ENCODE measurements at regions of chr4 and their contacts with region 1.

Region 1: GRCh38 chr4:5998333-5998936 is 19.8 kb downstream of the C4orf50 start:
- DNase-seq: peak; percentile 76
- ATAC-seq: peak; percentile 86
- H3K4me3 Mint-ChIP-seq: no peak overlapping the region
- H3K27ac Mint-ChIP-seq: no peak overlapping the region
- H3K4me1 Mint-ChIP-seq: no peaks in the 10 kb centered on the region
- H3K27me3 Mint-ChIP-seq: no peaks in the 10 kb centered on the region
- CTCF ChIP-seq: peak; percentile 94

Region 2: DNA sequence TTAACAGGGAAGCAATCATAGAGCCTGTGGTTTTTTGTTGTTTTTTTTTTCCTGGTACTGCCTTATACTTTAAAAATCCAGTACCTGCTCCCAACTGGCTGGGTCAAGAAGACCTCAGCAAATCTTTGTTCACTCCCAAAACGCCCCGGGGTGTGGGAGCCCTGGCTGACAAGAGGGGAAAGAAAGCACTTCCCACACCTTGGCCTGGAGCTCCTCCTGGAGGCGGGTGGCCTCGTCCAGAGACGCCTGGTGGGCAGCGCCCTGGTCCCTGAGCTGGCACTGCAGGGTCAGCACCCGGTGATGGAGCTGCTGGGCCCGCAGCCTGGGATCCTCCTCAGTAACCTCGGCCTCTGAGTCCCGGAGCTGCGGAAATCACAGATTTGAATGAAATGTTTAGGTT is 18.5 kb before region 1 on chr4:
- CTCF ChIA-PET with region 1: interaction called, 15 read pairs
- POLR2A ChIA-PET with region 1: no interaction called
- DNase-seq: peak; percentile 85
- ATAC-seq: peak; percentile 96
- H3K4me3 Mint-ChIP-seq: no peak overlapping the region
- H3K27ac Mint-ChIP-seq: no peak overlapping the region
- H3K4me1 Mint-ChIP-seq: peaks cover 2% of the 10 kb centered on the region; the same call in 1 of the 2 replicates
- H3K27me3 Mint-ChIP-seq: peaks cover 13% of the 10 kb centered on the region
- CTCF ChIP-seq: no peak

Region 3: GRCh38 chr4:6011686-6012085 is 13.3 kb after region 1 on chr4:
- CTCF ChIA-PET with region 1: interaction called, 24 read pairs
- POLR2A ChIA-PET with region 1: no interaction called
- DNase-seq: no peak
- ATAC-seq: no peak
- H3K4me3 Mint-ChIP-seq: no peak overlapping the region
- H3K27ac Mint-ChIP-seq: no peak overlapping the region
- H3K4me1 Mint-ChIP-seq: peaks cover 14% of the 10 kb centered on the region
- H3K27me3 Mint-ChIP-seq: peaks cover 29% of the 10 kb centered on the region
- CTCF ChIP-seq: no peak

Region 4: DNA sequence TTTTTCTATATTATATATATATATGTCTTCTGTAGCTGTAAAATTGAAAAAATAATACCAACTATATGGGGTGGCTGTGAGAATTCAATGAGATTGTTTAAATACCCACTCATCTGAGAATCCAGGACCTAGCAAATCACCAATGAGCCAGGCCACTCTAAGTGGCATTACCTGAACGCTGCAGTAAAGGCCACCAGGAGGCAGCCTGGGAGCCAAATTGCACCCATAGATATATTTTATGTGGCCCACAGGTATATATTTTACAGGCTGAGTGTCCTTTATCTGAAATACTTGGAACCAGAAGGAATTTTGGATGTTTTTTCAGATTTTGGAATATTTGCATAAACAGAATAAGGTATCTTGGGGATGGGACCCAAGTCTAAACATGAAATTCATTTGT is 78.0 kb after region 1 on chr4:
- CTCF ChIA-PET with region 1: interaction called, 24 read pairs
- POLR2A ChIA-PET with region 1: no interaction called
- DNase-seq: peak; percentile 43
- ATAC-seq: peak; percentile 62
- H3K4me3 Mint-ChIP-seq: no peak overlapping the region
- H3K27ac Mint-ChIP-seq: no peak overlapping the region
- H3K4me1 Mint-ChIP-seq: peaks cover 11% of the 10 kb centered on the region
- H3K27me3 Mint-ChIP-seq: no peaks in the 10 kb centered on the region
- CTCF ChIP-seq: peak; percentile 24; the same call in 1 of the 2 replicates

Region 5: DNA sequence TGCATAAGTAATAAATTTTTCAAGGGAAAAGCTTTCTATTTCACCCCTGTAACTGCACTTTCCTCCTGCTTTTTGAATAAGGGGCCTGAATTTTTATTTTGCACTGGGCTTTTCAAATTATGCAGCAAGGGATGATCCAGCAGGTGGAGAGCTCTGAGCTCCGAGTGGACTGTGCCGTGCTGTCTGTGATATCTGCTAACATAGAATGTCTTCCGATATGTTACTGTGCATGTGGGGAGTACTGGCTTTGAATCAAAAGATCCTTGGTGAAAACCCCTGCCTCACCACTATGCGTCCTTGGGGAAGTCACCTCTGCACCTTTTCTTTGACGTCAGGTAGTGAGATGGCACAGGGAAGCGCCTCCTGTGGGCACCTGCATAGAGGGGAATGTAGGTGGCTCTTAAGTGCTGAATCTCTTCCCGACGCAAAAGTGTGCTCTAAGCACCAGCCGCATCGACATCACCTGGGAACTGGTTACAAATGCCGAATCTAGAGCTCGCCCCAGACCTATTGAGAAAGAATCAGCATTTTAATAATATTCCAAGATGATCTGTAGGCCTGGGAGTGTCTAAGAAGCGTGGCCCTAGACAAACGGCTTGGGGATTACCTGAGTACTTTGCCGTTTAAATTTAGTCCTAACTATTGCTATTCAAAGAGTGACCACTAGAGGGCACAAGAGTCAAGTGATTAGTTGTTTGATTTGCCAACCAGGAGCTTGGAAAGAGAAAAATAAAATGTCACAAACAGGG is 252.0 kb after region 1 on chr4:
- CTCF ChIA-PET with region 1: interaction called, 13 read pairs
- POLR2A ChIA-PET with region 1: no interaction called
- DNase-seq: peak; percentile 43
- ATAC-seq: peak; percentile 70
- H3K4me3 Mint-ChIP-seq: peak overlapping the region; percentile 54
- H3K27ac Mint-ChIP-seq: no peak overlapping the region
- H3K4me1 Mint-ChIP-seq: peaks cover 18% of the 10 kb centered on the region
- H3K27me3 Mint-ChIP-seq: peaks cover 6% of the 10 kb centered on the region
- CTCF ChIP-seq: peak; percentile 80

Measured in WTC11 (cell line).